ENCODE measurements at regions of chr12 and their contacts with region 1.

Region 1: DNA sequence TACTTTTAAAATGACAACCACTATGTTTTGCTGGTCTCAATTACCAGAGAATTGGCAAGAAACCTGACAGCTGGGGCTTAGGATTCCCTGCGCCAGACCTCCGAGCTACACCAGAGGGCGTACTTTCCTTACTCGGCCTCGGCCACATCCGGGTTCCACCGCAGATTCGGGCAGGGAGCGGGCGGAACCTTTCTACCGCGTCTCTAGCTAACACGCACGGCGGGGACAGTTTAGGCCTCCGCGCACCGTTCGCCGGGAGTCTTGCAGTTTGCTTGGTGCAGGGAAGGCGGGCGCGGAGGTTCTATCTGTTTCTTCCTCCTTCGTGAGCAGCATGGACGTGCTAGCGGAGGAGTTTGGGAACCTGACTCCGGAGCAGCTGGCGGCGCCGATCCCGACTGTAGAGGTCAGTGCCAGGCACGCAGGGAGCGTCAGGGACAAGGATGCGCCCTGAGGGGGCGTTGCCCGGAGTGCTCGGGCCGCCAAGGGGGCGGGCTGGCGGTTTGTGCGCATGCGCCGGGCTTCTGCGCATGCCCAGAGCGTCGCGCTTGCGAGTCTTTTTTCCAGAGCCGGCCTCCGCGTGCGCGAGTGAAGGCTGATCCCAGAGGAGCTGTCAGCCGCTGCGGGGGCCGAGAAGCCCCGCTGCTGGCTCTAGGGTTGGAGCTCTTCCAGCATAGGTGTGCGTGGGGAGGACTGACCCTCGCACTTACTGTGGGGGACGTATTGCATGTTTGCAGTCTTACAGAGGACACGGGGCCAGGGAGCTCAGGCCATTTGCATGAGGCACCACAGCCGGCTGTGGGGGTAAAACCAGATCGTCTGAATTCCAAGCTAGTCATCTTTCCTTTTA is at the start of gene POLR3B:
- DNase-seq: peak; percentile 98
- ATAC-seq: peak; percentile 95
- H3K4me3 Mint-ChIP-seq: peak within 1 kb of the TSS; percentile 92
- H3K27ac Mint-ChIP-seq: peak within 1 kb of the TSS; percentile 92
- H3K4me1 Mint-ChIP-seq: peaks cover 14% of the 10 kb centered on the region
- H3K27me3 Mint-ChIP-seq: no peaks in the 10 kb centered on the region
- total RNA-seq, gene POLR3B: 9.1 to 11.7 TPM

Region 2: DNA sequence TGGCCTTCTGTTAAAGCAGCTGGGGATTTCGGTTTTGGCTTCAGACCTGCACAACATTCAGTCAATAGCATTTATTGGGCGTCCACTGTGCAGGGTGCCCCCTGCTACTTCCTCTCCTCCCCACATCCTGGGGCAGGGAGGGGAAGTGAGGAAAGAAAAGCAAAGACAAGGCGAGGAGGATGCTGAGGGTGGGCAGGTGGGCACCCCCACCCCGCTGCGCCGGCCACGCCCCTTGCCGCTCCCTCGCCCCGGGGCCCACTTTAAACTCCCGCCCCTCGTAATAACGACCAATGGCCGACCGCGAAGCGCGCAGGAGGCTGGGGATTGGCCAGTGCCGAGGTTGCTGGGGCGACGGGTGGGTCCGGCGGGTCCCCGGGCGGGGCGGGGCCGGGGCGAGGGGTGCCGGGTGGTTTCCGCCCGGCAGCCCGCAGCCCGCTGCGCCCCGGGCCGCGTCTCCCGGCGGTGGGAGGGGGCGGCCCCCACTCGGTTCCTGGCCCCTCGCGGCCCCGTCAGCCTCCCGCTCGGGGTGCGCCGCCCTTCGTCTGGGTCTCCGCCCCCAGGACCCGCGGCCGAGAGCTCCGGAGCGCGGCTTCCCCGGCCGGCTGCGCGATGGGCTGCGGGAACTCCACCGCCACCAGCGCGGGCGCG is 1027.4 kb before region 1 on chr12 and contains the start of gene C12orf75:
- CTCF ChIA-PET with region 1: no interaction called
- POLR2A ChIA-PET with region 1: no interaction called
- intact Hi-C with region 1: loop called in 1 of 2 experiments (anchors 5 kb)
- DNase-seq: peak; percentile 92
- ATAC-seq: peak; percentile 92
- H3K4me3 Mint-ChIP-seq: peak within 1 kb of the TSS; percentile 78
- H3K27ac Mint-ChIP-seq: peak within 1 kb of the TSS; percentile 80
- H3K4me1 Mint-ChIP-seq: peaks cover 39% of the 10 kb centered on the region
- H3K27me3 Mint-ChIP-seq: no peaks in the 10 kb centered on the region
- total RNA-seq, gene C12orf75: 53.8 to 59.9 TPM

Region 3: GRCh38 chr12:106247674-106248311 is 110.0 kb before region 1 on chr12 and contains the start of gene CKAP4:
- CTCF ChIA-PET with region 1: interaction called, 4 read pairs
- POLR2A ChIA-PET with region 1: no interaction called
- intact Hi-C with region 1: loop called (anchors 1 to 5 kb)
- DNase-seq: peak; percentile 72
- ATAC-seq: peak; percentile 49
- H3K4me3 Mint-ChIP-seq: peak within 1 kb of the TSS; percentile 68
- H3K27ac Mint-ChIP-seq: peak within 1 kb of the TSS; percentile 80
- H3K4me1 Mint-ChIP-seq: peaks cover 30% of the 10 kb centered on the region
- H3K27me3 Mint-ChIP-seq: no peaks in the 10 kb centered on the region
- total RNA-seq, gene CKAP4: 13.7 to 15.6 TPM

Region 4: GRCh38 chr12:106386813-106387535 is 29.2 kb after region 1 on chr12:
- CTCF ChIA-PET with region 1: interaction called, 12 read pairs
- POLR2A ChIA-PET with region 1: no interaction called
- intact Hi-C with region 1: no loop called
- DNase-seq: no peak
- ATAC-seq: no peak
- H3K4me3 Mint-ChIP-seq: no peak overlapping the region
- H3K27ac Mint-ChIP-seq: no peak overlapping the region
- H3K4me1 Mint-ChIP-seq: no peaks in the 10 kb centered on the region
- H3K27me3 Mint-ChIP-seq: no peaks in the 10 kb centered on the region

Region 5: DNA sequence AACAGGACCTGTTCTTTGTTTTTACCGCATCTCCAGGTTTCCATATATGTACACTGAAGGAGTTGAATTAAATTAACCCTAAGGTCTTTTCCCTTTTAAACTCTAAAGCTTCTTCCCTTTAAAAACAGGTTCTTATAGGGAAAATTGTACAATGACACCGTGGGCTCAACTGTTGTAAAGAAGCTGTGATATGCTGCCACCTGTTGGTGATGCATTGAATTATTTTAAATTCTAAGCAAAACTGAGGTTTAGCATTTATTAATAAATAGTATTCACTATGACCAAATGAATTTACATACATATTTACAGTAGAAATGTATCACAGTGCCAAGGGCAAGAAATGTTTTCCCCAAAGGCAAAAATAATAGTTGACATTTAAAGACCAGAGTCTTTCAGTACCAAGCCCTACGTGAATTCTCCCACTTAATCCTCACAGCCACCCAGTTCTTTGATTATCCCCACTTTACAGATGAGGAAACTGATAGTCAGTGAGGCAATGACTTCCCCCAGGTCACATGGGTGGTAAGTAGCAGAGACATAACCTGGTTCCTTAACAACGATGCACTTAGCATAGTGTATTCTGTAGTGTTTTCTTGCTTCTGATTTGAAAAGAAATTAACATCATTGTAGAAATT is 562.3 kb after region 1 on chr12:
- CTCF ChIA-PET with region 1: interaction called, 6 read pairs
- POLR2A ChIA-PET with region 1: no interaction called
- intact Hi-C with region 1: loop called in 1 of 2 experiments (anchors 1 kb)
- DNase-seq: peak; percentile 26
- ATAC-seq: no peak
- H3K4me3 Mint-ChIP-seq: no peak overlapping the region
- H3K27ac Mint-ChIP-seq: no peak overlapping the region
- H3K4me1 Mint-ChIP-seq: peaks cover 8% of the 10 kb centered on the region
- H3K27me3 Mint-ChIP-seq: peaks cover 5% of the 10 kb centered on the region

Region 6: GRCh38 chr12:106986625-106987430 is 629.1 kb after region 1 on chr12 and contains the start of gene MTERF2:
- CTCF ChIA-PET with region 1: interaction called, 3 read pairs
- POLR2A ChIA-PET with region 1: no interaction called
- intact Hi-C with region 1: loop called in 1 of 2 experiments (anchors 1 kb)
- DNase-seq: peak; percentile 88
- ATAC-seq: peak; percentile 93
- H3K4me3 Mint-ChIP-seq: peak within 1 kb of the TSS; percentile 85
- H3K27ac Mint-ChIP-seq: peak within 1 kb of the TSS; percentile 75
- H3K4me1 Mint-ChIP-seq: peaks cover 42% of the 10 kb centered on the region
- H3K27me3 Mint-ChIP-seq: no peaks in the 10 kb centered on the region
- total RNA-seq, gene MTERF2: 5.0 to 5.8 TPM

Measured in activated CD4-positive, alpha-beta T cell treated with anti-CD3 and anti-CD28 coated beads for 36 hours (primary cell).